Right ventricle myocardium inferior (tissue), 1 donor: ENCODE measurements at regions of chr2 and their contacts with region 1.

Region 1: DNA sequence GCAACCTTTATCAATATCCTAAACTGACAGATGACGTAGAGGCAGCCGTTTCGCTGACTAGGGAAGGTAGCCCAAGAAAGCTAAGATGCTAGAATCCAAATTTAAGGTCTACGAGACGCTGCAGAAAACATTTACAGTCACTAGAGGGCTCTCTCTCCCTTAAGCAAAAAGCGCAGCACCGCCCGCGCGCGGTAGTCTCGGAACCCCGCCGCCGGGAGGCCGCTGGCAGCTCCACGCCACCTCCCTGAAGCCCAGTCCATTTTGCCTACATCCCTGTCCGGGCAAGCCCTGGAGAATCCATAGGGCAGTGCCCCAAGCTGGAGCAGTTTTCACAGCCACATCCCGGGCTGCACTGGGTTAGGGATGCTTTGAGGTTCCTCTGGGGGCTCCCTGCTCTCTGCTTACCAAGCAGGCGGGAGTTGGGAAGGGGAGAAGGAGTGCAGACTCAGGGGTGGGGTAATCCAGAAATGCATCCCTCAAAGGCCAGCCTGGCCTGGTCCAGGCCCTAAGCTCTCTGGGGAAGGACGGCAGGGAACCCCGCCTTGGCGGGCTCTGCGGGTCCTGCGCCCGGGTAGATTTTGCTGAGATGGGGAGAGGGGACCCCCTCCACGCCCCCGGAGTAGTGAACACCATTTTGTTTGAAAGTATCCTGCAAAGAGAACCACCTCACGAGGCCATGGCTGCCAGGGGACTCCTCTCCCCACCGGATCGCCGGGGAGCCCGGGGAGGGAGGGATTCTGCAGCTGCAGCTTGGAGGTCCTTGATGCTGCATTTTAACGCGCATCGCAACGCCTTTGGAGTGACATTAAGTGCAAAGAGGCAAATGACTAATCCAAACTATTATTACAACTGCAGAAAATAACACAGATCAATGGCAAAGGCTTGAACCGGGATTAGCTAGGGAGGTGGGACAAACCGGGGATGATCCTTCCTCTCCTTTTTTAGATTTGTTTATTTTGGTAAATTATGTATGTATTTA is 1.3 kb upstream of the DPYSL5 start:
- DNase-seq: peak; percentile 84
- ATAC-seq: peak; percentile 84

Region 2: DNA sequence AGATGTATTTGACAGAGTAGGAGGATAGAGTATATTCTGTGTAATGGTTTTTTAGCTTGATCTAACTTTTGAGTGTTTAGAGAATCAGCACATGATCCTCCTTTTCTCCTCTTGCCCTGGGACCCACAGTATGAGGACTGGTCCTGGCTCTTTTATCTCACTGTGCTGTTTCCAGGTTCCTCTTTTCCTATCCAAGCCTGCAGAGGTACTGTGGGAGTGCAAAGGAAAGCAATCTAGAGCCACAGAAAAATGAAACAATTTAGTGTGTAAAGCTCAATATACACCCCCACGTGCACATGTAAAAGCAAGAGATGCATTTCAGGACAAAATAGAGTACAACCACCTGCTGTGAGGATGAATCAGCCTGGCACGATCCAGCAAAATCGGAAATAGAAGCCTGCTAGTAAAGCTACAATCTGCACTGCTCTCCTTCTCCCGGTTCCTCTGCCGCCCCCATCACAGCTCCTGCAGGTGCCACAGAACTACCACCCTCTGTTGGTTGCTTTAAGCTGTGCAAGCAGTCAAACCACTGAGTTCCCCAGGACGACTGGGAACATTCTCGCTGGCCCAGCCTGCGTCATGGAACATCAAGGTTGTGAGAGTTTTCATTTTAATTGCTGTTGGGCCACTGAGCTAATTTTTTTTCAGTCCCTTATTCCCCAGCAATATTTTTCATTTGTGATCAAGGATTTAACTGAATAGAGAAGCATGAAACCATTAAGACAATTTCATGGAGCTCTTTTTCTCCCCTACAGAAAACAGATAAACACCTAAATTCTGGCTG is 76.0 kb after region 1 on chr2:
- intact Hi-C with region 1: loop called (anchors 2 kb)
- DNase-seq: peak; percentile 62
- ATAC-seq: peak; percentile 69

Region 3: DNA sequence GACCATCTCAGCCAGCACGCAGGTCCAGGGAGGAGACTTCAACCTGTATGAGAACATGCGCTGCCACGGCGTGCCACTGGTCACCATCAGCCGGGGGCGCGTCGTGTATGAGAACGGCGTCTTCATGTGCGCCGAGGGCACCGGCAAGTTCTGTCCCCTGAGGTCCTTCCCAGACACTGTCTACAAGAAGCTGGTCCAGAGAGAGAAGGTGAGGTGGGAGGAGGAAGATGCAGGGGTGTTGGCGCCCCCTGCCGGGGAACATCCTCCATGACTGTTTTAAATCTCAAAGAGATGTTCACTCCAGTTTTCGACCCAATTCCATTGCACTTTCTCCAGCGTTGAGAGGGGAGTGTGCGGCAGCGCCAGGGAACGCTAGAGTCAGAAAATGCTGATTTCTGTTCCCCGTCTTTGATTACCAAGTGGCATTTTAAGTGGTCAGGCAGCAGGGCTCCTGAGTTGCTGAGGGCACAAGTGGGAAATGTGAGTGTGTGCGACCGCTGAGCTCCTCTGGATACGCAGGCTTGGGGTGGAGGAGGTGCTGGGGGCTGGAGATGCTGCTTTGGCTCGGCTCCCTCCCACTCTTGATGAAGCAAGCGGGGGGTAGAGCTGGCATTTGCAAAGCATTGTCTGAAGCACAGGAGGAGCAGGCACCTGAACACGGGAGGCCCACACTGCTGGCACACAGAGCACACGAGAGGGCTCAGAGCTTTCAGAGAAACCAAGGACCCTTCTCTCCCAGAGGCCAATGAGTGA is 96.1 kb after region 1 on chr2:
- intact Hi-C with region 1: loop called (anchors 1 kb)
- DNase-seq: peak; percentile 85
- ATAC-seq: peak; percentile 33